Activated CD8-positive, alpha-beta T cell treated with anti-CD3 and anti-CD28 coated beads for 36 hours (primary cell): ENCODE measurements at regions of chr20 and their contacts with region 1.

Region 1: DNA sequence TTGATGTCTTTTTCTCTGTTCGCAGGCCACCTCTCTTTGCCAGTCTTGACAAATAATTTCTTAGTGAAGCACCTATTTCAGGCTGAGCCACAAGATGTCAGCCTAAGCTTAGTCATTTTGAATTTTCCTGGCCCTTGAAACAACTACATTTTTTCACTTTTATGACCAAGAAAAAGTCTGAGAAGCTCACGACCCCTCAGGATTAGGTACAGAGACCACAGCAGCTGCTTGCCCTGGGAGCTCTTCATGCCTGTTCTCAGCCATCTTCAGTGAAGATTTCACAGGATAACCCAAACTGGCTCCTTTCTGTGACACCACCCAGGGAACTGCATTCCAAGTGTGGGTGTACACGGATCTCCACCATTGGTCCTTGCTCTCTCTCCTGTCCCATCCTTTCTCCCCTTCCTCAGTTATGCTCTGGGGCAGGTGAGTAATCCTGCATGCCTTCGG is 38.4 kb upstream of the SPTLC3 start:
- DNase-seq: peak; percentile 29
- ATAC-seq: no peak
- H3K4me3 Mint-ChIP-seq: no peak overlapping the region
- H3K27ac Mint-ChIP-seq: no peak overlapping the region
- H3K4me1 Mint-ChIP-seq: no peaks in the 10 kb centered on the region
- H3K27me3 Mint-ChIP-seq: no peaks in the 10 kb centered on the region
- CTCF ChIP-seq: peak; percentile 33

Region 2: DNA sequence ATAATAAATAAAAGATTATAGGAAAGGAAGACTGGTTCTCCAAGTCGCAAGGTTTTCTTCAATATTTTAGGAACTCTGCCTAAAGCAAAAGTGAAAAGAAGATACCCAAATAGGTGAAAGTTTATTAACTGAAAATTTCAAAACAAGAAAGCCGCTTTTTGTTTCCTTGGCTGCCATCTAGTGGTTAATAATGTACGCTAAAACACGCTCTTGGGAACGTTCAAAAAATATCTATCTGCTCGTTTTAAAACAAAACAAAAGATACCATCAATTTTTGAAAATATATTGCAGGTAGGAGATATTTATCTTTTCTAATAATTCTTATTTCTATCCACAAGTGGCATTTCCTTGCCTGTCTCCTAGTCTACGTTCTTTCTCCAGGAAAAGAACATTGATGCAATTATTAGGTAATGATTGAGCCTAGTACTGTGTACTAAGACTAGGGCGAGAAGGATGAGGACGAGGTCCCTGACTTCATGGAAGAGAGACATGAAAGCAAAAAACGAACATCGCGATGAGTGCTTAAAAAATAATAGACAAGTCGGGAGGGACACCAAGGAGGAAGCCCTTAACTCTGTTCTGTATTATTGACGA is 135.6 kb after region 1 on chr20:
- CTCF ChIA-PET with region 1: interaction called, 12 read pairs
- POLR2A ChIA-PET with region 1: no interaction called
- intact Hi-C with region 1: loop called (anchors 5 kb)
- DNase-seq: no peak
- ATAC-seq: no peak
- H3K4me3 Mint-ChIP-seq: no peak overlapping the region
- H3K27ac Mint-ChIP-seq: no peak overlapping the region
- H3K4me1 Mint-ChIP-seq: no peaks in the 10 kb centered on the region
- H3K27me3 Mint-ChIP-seq: peaks cover 5% of the 10 kb centered on the region
- CTCF ChIP-seq: peak; percentile 80

Region 3: GRCh38 chr20:13274275-13274861 is 304.0 kb after region 1 on chr20:
- CTCF ChIA-PET with region 1: no interaction called
- POLR2A ChIA-PET with region 1: no interaction called
- intact Hi-C with region 1: no loop called
- DNase-seq: no peak
- ATAC-seq: no peak
- H3K4me3 Mint-ChIP-seq: no peak overlapping the region
- H3K27ac Mint-ChIP-seq: no peak overlapping the region
- H3K4me1 Mint-ChIP-seq: no peaks in the 10 kb centered on the region
- H3K27me3 Mint-ChIP-seq: peaks cover 2% of the 10 kb centered on the region
- CTCF ChIP-seq: no peak

Region 4: DNA sequence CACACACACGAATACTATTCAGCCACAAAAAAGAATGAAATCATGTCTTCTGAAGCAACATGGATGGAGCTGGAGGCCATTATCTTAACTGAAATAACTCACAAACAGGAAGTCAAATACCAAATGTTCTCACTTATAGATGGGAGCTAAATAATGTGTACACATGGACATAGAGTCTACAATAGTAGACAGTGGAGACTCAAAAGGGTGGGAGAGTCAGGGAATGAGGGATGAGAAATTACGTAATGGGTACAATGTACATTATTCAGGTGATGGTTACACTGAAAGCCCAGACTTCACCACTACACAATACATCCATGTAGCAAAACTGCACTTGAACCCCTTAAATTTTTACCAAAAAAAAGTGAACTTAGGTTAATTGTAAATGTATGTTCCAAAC is 508.0 kb after region 1 on chr20:
- CTCF ChIA-PET with region 1: no interaction called
- POLR2A ChIA-PET with region 1: no interaction called
- intact Hi-C with region 1: no loop called
- DNase-seq: no peak
- ATAC-seq: no peak
- H3K4me3 Mint-ChIP-seq: no peak overlapping the region
- H3K27ac Mint-ChIP-seq: no peak overlapping the region
- H3K4me1 Mint-ChIP-seq: no peaks in the 10 kb centered on the region
- H3K27me3 Mint-ChIP-seq: no peaks in the 10 kb centered on the region
- CTCF ChIP-seq: no peak